ENCODE measurements at regions of chr16 and their contacts with region 1.

Region 1: DNA sequence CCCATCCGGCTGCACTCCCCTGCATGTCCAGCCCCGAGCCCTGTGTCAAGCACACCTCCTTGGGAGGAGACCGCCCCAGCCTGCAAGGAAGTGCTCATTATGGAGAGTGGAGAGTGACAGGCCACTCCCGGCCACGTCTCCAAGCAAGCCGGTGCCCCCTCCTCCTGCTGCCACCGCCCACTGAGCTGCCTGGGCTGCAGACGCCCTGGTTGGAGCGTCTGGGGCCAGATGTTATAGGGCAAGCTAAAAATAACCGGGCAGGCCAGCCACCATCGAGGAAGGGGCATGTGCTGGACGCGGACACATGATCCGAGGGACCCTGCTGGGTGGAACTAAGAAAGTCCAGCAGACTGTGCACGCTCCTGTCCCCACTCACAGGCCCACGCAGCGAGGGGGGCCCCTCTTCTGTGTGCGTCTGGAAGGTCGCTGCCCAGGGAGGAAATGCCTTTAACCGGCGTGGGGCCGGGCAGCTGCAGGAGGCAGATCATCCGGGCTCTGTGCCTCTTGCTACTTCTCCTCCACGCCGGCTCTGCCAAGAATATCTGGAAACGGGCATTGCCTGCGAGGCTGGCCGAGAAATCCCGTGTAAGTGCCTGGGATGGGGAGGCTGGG is at the start of gene WFDC1:
- DNase-seq: no peak
- H3K4me3 ChIP-seq: no peak within 1 kb of the TSS
- H3K27ac ChIP-seq: no peak within 1 kb of the TSS
- H3K4me1 ChIP-seq: peaks cover 5% of the 10 kb centered on the region
- H3K27me3 ChIP-seq: peaks cover 14% of the 10 kb centered on the region
- CTCF ChIP-seq: no peak
- total RNA-seq, gene WFDC1: not detected

Region 2: GRCh38 chr16:84228321-84228838 is 66.3 kb before region 1 on chr16:
- CTCF ChIA-PET with region 1: no interaction called
- dilution Hi-C with region 1: no loop called
- in situ Hi-C with region 1: no loop called
- intact Hi-C with region 1: no loop called
- DNase-seq: peak; percentile 32
- H3K4me3 ChIP-seq: no peak overlapping the region
- H3K27ac ChIP-seq: no peak overlapping the region
- H3K4me1 ChIP-seq: peaks cover 5% of the 10 kb centered on the region
- H3K27me3 ChIP-seq: no peaks in the 10 kb centered on the region
- CTCF ChIP-seq: no peak

Region 3: DNA sequence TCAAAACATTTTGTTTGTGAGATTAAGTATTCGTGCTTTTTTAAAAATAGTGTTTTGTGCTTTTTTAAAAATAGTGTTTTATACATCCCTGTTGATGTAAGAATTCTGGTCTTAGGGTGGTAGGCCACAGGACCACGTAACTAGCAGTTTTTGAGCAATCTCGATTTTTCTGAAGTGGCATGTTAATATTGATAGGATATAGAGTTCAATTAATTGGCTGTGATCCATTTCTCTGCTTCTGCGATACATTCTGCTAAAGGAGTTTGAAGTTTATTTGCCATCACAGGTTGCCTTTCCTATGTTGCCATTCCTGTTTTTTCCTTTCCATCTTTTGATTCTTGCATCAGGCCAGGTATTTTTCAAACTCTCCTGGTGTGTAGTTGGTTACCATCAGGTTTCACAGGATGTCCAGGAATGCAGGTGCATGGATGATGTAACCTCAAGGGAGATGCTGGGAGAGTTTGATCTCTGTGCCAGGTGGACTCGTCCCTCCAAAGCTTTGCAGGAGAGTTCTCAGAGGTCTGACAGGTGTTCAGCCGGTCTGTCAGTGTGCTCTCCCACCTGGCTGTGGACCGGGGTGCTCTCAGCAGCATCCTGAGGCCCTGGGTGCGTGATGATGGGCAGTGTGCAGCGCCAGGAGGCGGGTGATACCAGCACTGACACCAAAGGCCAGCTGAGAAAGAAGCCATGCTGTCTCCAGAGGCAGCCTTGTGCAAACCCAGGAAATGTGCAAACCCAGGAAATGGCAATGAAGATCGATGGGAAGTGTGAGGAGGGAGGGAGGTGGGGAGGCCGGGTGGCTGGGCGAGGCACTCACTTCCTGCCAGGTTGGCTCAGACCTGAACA is 75.3 kb after region 1 on chr16:
- CTCF ChIA-PET with region 1: no interaction called
- dilution Hi-C with region 1: loop called (anchors 5 kb)
- in situ Hi-C with region 1: no loop called
- intact Hi-C with region 1: no loop called
- DNase-seq: peak; percentile 73
- H3K4me3 ChIP-seq: no peak overlapping the region
- H3K27ac ChIP-seq: no peak overlapping the region
- H3K4me1 ChIP-seq: peaks cover 10% of the 10 kb centered on the region
- H3K27me3 ChIP-seq: peaks cover 29% of the 10 kb centered on the region
- CTCF ChIP-seq: no peak

Measured in mammary epithelial cell (primary cell).